CD8-positive, alpha-beta T cell (primary cell): ENCODE measurements at regions of chr22 and their contacts with region 1.

Region 1: DNA sequence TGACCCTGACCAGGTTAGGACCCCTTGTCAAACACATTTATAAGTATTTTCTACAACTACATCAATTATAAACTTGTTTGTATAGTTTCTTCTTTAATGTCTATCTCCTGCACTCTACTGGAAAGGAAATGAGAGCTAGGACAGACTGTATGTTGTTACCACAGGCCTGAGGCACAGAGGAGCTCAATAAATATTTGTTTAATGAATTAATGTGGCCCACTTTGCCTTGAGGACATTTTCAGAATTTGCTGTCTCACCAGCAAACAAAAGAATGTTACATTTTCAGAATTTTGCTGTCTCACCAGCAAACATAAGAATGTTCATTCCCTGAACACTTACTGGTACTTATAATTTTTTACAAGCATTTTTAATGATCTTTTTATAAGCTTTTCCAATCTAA is 41.9 kb upstream of the WNT7B start:
- DNase-seq: no peak
- ATAC-seq: no peak
- H3K4me3 ChIP-seq: no peak overlapping the region
- H3K4me3 Mint-ChIP-seq: no peak overlapping the region
- H3K27ac ChIP-seq: no peak overlapping the region
- H3K27ac Mint-ChIP-seq: no peak overlapping the region
- H3K4me1 ChIP-seq: no peaks in the 10 kb centered on the region
- H3K4me1 Mint-ChIP-seq: peaks cover 2% of the 10 kb centered on the region
- H3K27me3 ChIP-seq: no peaks in the 10 kb centered on the region
- H3K27me3 Mint-ChIP-seq: peaks cover 2% of the 10 kb centered on the region
- CTCF ChIP-seq: no peak

Region 2: GRCh38 chr22:46116491-46116958 is 97.7 kb after region 1 on chr22:
- CTCF ChIA-PET with region 1: interaction called, 58 read pairs
- POLR2A ChIA-PET with region 1: no interaction called
- intact Hi-C with region 1: no loop called
- DNase-seq: peak; percentile 70 to 90 (median 88)
- ATAC-seq: peak; percentile 97
- H3K4me3 ChIP-seq: no peak overlapping the region
- H3K4me3 Mint-ChIP-seq: no peak overlapping the region
- H3K27ac ChIP-seq: no peak overlapping the region
- H3K27ac Mint-ChIP-seq: no peak overlapping the region
- H3K4me1 ChIP-seq: peaks cover 5% of the 10 kb centered on the region
- H3K4me1 Mint-ChIP-seq: no peaks in the 10 kb centered on the region
- H3K27me3 ChIP-seq: no peaks in the 10 kb centered on the region
- H3K27me3 Mint-ChIP-seq: no peaks in the 10 kb centered on the region
- CTCF ChIP-seq: peak; percentile 70

Region 3: DNA sequence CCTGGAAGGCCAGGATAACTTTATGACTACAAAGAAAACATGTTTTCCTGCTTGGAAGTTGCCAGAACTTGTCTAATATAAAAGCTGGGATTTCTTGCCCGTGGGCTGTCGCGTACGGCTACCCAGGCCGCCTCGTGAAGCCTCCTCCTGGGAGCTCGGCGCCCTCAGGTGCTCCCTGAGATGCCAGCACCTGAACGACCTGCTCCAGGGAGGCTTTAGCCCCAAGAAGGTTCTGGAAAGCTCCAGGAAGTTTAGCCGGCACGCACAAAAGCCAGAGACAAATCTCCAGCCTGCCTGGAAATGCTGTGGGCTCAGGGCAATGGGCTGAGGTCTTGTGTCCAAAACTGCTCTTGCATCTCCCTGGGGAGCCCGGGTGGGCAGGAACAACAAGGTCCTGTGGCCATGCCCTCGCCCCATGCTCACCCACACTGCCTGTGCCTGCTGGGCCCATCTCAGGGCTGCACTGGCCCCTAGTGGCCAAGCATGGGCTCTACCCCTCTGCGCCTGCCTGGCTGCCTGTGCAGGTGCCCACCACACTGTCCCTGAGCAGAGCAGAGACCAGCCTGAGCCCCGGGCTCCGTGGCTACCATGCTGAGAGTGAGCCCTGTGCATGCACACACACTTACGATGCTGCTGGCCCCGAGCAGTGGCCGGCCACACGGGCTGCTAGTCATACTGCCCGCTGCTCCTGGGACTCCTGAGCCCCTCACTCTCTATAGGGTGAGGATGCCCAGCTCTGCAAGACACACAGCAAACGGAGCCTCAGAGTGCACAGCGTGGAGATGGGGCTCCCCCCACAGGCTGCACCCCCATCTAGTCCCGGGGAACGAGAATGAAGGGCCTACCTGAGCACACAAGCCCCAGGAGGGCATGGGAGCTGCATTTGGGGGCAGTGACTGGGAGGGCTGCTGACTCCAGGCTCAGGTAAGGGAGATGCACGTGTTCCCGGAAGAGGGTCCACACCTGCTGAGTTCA is 523.5 kb after region 1 on chr22:
- CTCF ChIA-PET with region 1: no interaction called
- POLR2A ChIA-PET with region 1: no interaction called
- intact Hi-C with region 1: no loop called
- DNase-seq: peak; percentile 51 to 84 (median 72)
- ATAC-seq: peak; percentile 100
- H3K4me3 ChIP-seq: no peak overlapping the region
- H3K4me3 Mint-ChIP-seq: no peak overlapping the region
- H3K27ac ChIP-seq: no peak overlapping the region
- H3K27ac Mint-ChIP-seq: no peak overlapping the region
- H3K4me1 ChIP-seq: no peaks in the 10 kb centered on the region
- H3K4me1 Mint-ChIP-seq: peaks cover 7% of the 10 kb centered on the region
- H3K27me3 ChIP-seq: peaks cover 5 to 11% of the 10 kb centered on the region in 2 experiments
- H3K27me3 Mint-ChIP-seq: peaks cover 44% of the 10 kb centered on the region
- CTCF ChIP-seq: peak; percentile 79